ENCODE measurements at regions of chr14 and their contacts with region 1.

Region 1: GRCh38 chr14:70027785-70028428 is 148.7 kb downstream of the SMOC1 start:
- DNase-seq: peak; percentile 75 to 91 (median 89)
- ATAC-seq: peak; percentile 77 to 80
- H3K4me3 ChIP-seq: no peak overlapping the region
- H3K27ac ChIP-seq: no peak overlapping the region
- H3K4me1 ChIP-seq: no peaks in the 10 kb centered on the region
- H3K27me3 ChIP-seq: no peaks in the 10 kb centered on the region

Region 2: GRCh38 chr14:69818757-69819191 is 209.1 kb before region 1 on chr14:
- intact Hi-C with region 1: loop called (anchors 1 to 2 kb)
- DNase-seq: peak; percentile 22 to 66 (median 62)
- ATAC-seq: peak; percentile 33 to 82
- H3K4me3 ChIP-seq: no peak overlapping the region
- H3K27ac ChIP-seq: no peak overlapping the region
- H3K4me1 ChIP-seq: no peaks in the 10 kb centered on the region
- H3K27me3 ChIP-seq: no peaks in the 10 kb centered on the region

Region 3: DNA sequence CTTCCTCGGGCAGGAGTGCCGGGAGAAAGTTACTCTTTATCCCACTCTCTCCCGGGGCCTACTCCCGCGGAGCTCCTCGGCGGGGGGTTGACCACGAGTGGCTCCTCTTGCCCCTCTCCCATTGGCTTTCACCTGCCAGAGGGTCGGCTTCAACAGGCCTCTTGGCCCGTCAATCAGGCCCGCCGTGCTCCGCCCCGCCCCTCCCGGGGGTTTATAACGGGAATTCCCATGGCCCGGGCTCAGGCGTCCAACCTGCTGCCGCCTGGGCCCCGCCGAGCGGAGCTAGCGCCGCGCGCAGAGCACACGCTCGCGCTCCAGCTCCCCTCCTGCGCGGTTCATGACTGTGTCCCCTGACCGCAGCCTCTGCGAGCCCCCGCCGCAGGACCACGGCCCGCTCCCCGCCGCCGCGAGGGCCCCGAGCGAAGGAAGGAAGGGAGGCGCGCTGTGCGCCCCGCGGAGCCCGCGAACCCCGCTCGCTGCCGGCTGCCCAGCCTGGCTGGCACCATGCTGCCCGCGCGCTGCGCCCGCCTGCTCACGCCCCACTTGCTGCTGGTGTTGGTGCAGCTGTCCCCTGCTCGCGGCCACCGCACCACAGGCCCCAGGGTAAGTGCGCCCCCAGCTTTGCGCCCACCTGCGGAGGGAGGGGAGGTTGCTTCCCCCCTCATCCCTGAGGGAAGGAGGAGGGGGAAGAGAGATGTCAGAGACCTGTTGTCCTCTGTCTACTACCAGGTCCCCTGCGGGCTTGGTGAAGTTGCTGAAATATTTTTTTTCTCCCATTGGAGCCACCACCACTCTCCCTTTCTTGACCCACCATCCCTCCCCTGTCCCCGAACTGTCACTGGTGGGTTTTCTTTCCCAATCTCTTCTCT is 148.5 kb before region 1 on chr14 and contains the start of gene SMOC1:
- intact Hi-C with region 1: loop called in 1 of 4 experiments (anchors 5 kb)
- DNase-seq: peak; percentile 77 to 87 (median 81)
- ATAC-seq: peak; percentile 86 to 97
- H3K4me3 ChIP-seq: peak within 1 kb of the TSS; percentile 11
- H3K27ac ChIP-seq: no peak within 1 kb of the TSS
- H3K4me1 ChIP-seq: no peaks in the 10 kb centered on the region
- H3K27me3 ChIP-seq: peaks cover 3% of the 10 kb centered on the region
- total RNA-seq, gene SMOC1: 18.3 to 37.0 (median 23.7) TPM

Region 4: GRCh38 chr14:70096866-70097265 is 69.0 kb after region 1 on chr14:
- intact Hi-C with region 1: no loop called
- DNase-seq: no peak
- ATAC-seq: no peak
- H3K4me3 ChIP-seq: no peak overlapping the region
- H3K27ac ChIP-seq: no peak overlapping the region
- H3K4me1 ChIP-seq: peaks cover 2% of the 10 kb centered on the region
- H3K27me3 ChIP-seq: no peaks in the 10 kb centered on the region

Measured in right cardiac atrium (tissue), 5 donors.